GM12878 (cell line): ENCODE measurements at regions of chr3 and their contacts with region 1.

Region 1: DNA sequence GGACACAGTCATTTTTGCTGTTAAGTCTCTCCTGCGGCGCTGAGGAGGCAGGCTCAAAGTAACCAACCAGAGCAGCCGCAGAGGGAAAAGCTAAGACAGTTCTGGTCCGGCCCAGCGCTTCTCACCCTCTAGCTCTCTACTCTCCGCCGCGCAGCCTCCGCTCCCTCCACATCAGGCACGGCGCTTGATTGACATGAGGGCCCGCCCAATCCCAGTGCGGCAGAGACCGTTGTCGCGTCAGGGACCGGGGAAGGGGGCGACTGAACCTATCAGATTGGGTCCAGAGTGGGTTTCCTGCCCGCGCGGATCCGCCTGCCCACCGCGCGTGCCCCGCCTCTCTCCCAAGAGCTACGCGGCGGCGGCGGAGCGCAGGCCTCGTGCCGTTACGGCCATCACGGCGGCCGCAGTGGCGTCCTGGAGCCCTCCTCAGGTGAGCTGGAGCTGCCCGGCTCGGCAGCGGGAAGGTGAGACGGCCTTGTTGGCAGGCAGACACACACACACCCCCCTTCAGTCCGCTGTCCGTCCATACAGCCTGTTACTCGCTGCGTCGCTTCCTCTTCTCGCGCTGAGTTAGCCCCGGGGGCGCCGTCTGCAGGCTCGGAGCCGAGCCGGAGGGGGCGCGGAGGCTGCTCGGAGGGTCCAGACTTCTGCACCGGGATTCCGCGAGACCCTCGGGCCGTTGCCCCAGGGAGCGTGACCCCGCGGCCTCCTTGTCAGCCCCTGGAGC is at the start of gene NCK1:
- DNase-seq: peak; percentile 90
- ATAC-seq: peak; percentile 95
- H3K4me3 ChIP-seq: peak within 1 kb of the TSS; percentile 87
- H3K27ac ChIP-seq: peak within 1 kb of the TSS; percentile 92
- H3K4me1 ChIP-seq: 0 out of 2 replicates have a peak, but pooled peaks cover 2% of the 10 kb centered on the region
- H3K27me3 ChIP-seq: no peaks in the 10 kb centered on the region
- CTCF ChIP-seq: no peak
- EP300 ChIP-seq: peak in 1 of 2 experiments; percentile 13; a peak in 1 of 4 replicates
- POLR2A ChIP-seq: peak; percentile 98
- RAD21 ChIP-seq: no peak
- polyA plus RNA-seq, gene NCK1: 18.5 to 20.4 TPM

Region 2: DNA sequence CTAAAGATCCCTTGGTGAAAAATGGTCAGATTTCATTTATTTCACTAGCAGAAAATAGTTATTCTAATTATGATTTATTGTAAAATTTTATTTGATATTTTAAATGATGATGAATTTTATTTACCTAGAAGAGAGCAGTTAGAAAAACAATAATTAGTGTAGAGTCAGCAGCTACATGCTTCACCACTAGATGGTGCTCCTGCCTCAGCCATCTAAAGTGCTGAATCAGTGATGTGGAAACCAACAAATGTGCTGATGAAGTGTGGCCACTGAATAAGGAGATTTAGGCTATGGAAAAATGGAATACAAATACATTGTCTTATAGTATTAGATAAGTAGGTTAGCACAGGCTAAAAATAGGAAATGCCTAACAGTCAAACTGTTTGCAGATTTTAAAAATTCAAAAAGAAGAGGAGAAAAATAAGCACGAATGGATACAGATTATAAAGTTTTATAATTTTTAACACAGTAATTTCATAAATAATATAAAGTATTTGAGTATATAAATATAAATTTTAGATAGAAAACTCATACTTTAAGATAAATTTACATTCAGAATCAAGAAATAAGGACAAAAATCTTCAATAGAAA is 786.7 kb before region 1 on chr3:
- CTCF ChIA-PET with region 1: no interaction called
- POLR2A ChIA-PET with region 1: no interaction called
- RAD21 ChIA-PET with region 1: no interaction called
- SMC1A ChIA-PET with region 1: interaction called, 3 read pairs
- in situ Hi-C with region 1: no loop called
- intact Hi-C with region 1: loop called (anchors 5 kb)
- DNase-seq: peak; percentile 40
- ATAC-seq: peak; percentile 89
- H3K4me3 ChIP-seq: no peak overlapping the region
- H3K27ac ChIP-seq: no peak overlapping the region
- H3K4me1 ChIP-seq: no peaks in the 10 kb centered on the region
- H3K27me3 ChIP-seq: no peaks in the 10 kb centered on the region; a peak in 1 of 4 replicates
- CTCF ChIP-seq: peak; percentile 76 to 96 (median 91)
- EP300 ChIP-seq: no peak
- POLR2A ChIP-seq: no peak
- RAD21 ChIP-seq: peak; percentile 99

Region 3: DNA sequence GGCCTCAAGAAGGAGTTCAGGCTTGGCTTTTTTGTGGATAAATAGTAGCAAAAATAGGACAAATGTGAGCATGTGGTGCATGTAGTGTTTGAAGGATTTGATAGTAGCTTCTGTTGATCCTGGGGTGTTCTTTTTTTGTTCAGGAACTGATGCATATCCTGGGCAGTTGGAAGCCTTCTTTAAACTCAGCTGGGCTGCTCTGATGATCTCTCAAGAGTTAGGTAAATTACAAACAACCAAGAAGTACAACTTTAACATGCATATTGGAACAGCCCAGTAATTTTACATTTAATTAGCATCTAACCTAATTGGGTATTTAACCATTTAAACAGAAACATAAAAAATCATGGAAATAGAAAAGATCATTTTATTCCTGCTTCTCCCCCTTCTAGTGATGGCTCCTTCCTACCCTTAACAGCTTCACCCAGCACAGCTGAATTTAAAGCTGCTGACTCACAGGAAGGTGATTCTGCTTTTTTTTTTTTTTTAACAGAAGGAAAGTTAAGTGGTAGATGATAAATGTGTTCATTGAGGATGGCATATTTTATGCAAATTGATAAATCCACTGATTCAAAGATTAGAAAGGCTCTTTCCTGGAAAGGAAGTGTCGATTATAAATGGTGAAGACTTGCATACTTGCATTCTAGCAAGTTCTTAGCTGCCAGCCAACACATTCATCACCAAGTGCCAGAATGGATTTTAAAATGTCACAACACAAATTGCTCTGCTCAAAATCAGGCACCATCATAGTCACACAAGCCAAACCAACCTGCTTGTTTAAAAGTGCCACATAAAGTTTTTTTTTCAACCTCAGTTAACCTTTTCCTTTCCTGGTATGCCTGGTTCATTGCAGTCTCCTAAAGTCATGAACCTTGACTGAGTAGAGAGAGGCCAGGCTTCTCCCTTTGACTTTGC is 23.2 kb before region 1 on chr3:
- CTCF ChIA-PET with region 1: interaction called, 3 read pairs
- POLR2A ChIA-PET with region 1: interaction called, 4 read pairs
- RAD21 ChIA-PET with region 1: no interaction called
- SMC1A ChIA-PET with region 1: interaction called, 13 read pairs
- in situ Hi-C with region 1: no loop called
- intact Hi-C with region 1: no loop called
- DNase-seq: no peak
- ATAC-seq: no peak
- H3K4me3 ChIP-seq: no peak overlapping the region
- H3K27ac ChIP-seq: no peak overlapping the region
- H3K4me1 ChIP-seq: no peaks in the 10 kb centered on the region
- H3K27me3 ChIP-seq: no peaks in the 10 kb centered on the region
- CTCF ChIP-seq: no peak
- EP300 ChIP-seq: no peak
- POLR2A ChIP-seq: no peak
- RAD21 ChIP-seq: no peak

Region 4: GRCh38 chr3:136909187-136909586 is 47.1 kb after region 1 on chr3:
- CTCF ChIA-PET with region 1: interaction called, 7 read pairs
- POLR2A ChIA-PET with region 1: interaction called, 4 read pairs
- RAD21 ChIA-PET with region 1: interaction called, 10 read pairs
- SMC1A ChIA-PET with region 1: interaction called, 9 read pairs
- in situ Hi-C with region 1: no loop called
- intact Hi-C with region 1: loop called (anchors 5 kb)
- DNase-seq: no peak
- ATAC-seq: peak; percentile 77
- H3K4me3 ChIP-seq: 0 out of 2 replicates have a peak overlapping the region, but pooled peaks have one; percentile 3
- H3K27ac ChIP-seq: peak overlapping the region; percentile 46; the same call in 1 of the 2 replicates
- H3K4me1 ChIP-seq: peaks cover 4% of the 10 kb centered on the region
- H3K27me3 ChIP-seq: no peaks in the 10 kb centered on the region
- CTCF ChIP-seq: no peak
- EP300 ChIP-seq: no peak
- POLR2A ChIP-seq: no peak
- RAD21 ChIP-seq: no peak

Region 5: DNA sequence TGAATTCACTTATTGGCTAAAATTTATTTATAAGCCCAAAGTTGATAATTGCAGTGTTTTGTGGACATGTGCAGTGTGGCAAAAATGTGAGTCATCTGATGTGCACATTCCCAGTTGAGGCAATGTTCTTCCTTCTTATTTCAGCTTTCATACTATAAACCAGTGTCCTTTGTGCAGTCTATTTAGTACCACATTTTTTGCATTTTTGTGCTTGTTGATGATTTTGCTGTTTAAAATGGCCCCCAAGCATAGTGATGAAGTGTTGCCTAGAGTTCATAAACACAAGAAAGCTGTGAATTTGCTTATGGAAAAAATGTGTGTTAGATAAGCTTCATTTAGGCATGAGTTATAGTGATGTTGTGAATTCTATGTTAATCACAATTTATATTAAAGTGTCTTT is 76.3 kb after region 1 on chr3:
- CTCF ChIA-PET with region 1: interaction called, 16 read pairs
- POLR2A ChIA-PET with region 1: interaction called, 7 read pairs
- RAD21 ChIA-PET with region 1: interaction called, 13 read pairs
- SMC1A ChIA-PET with region 1: interaction called, 9 read pairs
- in situ Hi-C with region 1: no loop called
- intact Hi-C with region 1: no loop called
- DNase-seq: no peak
- ATAC-seq: peak; percentile 21
- H3K4me3 ChIP-seq: no peak overlapping the region
- H3K27ac ChIP-seq: no peak overlapping the region; the same call in 1 of the 2 replicates
- H3K4me1 ChIP-seq: peaks cover 12% of the 10 kb centered on the region
- H3K27me3 ChIP-seq: no peaks in the 10 kb centered on the region
- CTCF ChIP-seq: no peak
- EP300 ChIP-seq: no peak
- POLR2A ChIP-seq: no peak
- RAD21 ChIP-seq: no peak

Region 6: GRCh38 chr3:137347132-137347531 is 485.1 kb after region 1 on chr3:
- CTCF ChIA-PET with region 1: no interaction called
- POLR2A ChIA-PET with region 1: no interaction called
- RAD21 ChIA-PET with region 1: no interaction called
- SMC1A ChIA-PET with region 1: no interaction called
- in situ Hi-C with region 1: no loop called
- intact Hi-C with region 1: loop called (anchors 10 kb)
- DNase-seq: no peak
- ATAC-seq: peak; percentile 48; the same call in 2 of the 3 replicates
- H3K4me3 ChIP-seq: no peak overlapping the region
- H3K27ac ChIP-seq: no peak overlapping the region
- H3K4me1 ChIP-seq: no peaks in the 10 kb centered on the region; the same call in 1 of the 2 replicates
- H3K27me3 ChIP-seq: no peaks in the 10 kb centered on the region
- CTCF ChIP-seq: peak in 1 of 3 experiments; percentile 28; a peak in 1 of 6 replicates
- EP300 ChIP-seq: no peak
- POLR2A ChIP-seq: no peak
- RAD21 ChIP-seq: no peak